Endothelial cell of umbilical vein (primary cell): ENCODE measurements at regions of chr3 and their contacts with region 1.

Region 1: DNA sequence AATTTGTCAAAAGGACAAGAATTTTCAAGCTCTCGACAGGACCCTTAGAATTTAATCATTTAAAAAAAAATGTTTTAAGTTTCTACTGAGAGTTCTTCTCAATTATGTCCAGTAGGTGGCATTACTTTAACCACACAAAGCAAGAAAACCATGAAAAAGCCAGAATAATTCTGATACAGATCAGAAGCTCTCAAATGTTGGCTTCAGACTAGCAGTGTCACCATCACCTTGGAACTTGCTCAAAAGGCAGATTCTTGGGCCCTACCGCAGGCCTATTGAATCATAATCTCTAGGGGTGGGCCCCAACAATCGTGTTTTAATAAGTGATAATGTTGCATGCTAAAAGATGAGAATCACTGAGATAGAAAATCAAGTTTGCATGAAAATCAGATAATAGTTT is 99.5 kb upstream of the KCNMB2 start:
- DNase-seq: peak; percentile 44
- H3K4me3 ChIP-seq: no peak overlapping the region
- H3K27ac ChIP-seq: no peak overlapping the region
- H3K4me1 ChIP-seq: no peaks in the 10 kb centered on the region
- H3K27me3 ChIP-seq: no peaks in the 10 kb centered on the region
- CTCF ChIP-seq: peak; percentile 29 to 42
- POLR2A ChIP-seq: no peak

Region 2: DNA sequence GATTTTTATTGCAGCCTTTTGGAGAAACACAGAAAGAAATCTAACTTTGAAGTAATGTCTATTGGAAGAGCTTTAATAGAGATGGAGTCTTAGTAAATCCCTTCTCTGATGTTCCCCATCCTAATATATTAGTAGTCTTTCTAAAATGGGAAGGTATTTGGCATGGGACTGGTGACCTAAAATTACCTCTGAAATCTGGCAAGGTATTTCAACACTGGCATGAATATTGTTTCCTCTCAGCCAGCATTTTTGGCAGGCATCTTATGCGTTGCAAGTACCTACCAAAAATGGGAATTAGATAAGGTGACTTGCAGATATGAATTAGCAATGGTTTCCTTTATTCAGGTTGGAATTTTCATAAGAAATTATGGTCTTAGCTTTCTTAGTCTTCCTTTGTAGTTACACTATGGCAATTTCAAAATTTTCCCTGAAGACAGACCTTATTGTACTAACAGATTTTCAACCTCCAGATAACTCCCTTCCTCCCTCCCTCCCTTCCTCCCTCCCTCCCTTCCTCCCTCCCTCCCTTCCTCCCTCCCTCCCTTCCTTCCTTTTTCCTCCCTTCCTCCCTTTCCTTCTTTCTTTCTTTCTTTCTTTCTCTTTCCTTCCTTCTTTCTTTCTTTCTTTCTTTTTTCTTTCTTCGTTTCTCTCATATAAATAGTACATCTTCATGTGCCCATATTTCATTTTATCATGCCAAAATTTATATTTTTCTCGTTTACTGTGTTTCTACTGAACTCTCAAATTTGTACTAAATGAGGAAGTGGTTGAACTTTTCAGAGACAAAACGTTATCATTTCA is 68.8 kb before region 1 on chr3:
- CTCF ChIA-PET with region 1: no interaction called
- POLR2A ChIA-PET with region 1: no interaction called
- dilution Hi-C with region 1: no loop called
- intact Hi-C with region 1: no loop called
- DNase-seq: peak; percentile 29
- H3K4me3 ChIP-seq: no peak overlapping the region
- H3K27ac ChIP-seq: no peak overlapping the region
- H3K4me1 ChIP-seq: no peaks in the 10 kb centered on the region
- H3K27me3 ChIP-seq: no peaks in the 10 kb centered on the region
- CTCF ChIP-seq: no peak
- POLR2A ChIP-seq: no peak

Region 3: DNA sequence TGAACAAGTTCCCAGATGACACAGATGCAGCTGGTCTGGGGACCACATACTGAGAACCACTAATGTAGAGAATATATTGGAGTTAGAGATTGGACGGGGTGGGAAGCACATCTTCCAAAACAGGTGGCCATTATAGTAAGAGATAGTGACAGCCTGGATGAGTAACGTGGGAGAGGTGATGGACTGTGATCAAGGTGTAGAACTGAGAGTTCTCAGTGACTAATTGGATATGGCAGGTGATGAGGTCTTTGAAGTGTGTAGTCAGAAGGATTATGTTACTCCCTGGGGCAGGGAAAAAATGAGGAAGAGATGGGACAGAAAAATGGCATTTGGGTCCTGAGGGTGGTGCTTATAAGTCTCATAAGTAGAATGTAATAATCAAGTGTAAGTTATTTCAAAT is 166.1 kb after region 1 on chr3:
- CTCF ChIA-PET with region 1: interaction called, 6 read pairs
- POLR2A ChIA-PET with region 1: no interaction called
- dilution Hi-C with region 1: no loop called
- intact Hi-C with region 1: loop called (anchors 1 kb)
- DNase-seq: no peak
- H3K4me3 ChIP-seq: no peak overlapping the region
- H3K27ac ChIP-seq: no peak overlapping the region
- H3K4me1 ChIP-seq: no peaks in the 10 kb centered on the region
- H3K27me3 ChIP-seq: peaks cover 3 to 4% of the 10 kb centered on the region in 2 experiments
- CTCF ChIP-seq: no peak
- POLR2A ChIP-seq: no peak

Region 4: DNA sequence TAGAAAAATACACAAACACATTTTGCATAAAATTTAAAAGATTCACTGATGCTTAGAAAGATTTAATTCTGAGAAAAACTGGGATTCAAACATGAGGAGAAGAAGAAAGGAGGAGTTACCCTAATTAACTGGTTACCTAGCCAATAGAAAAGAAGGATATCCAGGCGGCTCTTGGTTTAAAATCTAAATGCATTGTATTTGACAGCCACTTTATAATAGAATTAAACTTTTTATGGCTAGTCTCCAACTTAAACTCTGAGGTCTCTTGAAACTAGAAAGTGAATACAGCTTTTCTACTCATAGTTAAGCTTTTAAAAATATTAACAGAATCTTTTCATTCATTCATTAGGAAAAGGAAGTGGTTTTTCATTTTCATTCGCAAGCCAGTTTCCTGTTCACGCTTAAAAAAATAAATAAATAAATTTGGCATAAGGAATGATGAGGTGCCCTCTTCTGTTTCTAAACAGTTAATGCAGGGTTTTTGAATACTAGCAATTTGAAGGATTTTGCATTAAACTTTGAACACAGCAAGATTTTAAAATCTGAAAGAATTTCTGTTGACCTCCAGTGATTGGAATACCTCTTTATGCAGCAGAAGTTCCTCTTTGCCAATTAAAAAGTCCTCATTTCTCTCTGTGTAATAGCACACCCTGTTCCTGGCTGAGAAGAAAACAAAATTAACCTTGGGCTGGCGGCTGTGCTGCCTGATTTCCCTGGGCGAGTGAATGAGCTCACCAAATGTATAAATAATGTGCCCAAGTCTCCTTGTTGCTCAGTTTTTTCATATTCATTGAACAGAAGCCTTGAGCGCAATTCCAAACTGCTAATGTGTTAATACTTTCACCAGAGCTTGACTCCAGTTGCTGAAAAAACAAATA is 529.8 kb after region 1 on chr3:
- CTCF ChIA-PET with region 1: interaction called, 107 read pairs
- POLR2A ChIA-PET with region 1: interaction called, 3 read pairs
- dilution Hi-C with region 1: no loop called
- intact Hi-C with region 1: loop called (anchors 1 kb)
- DNase-seq: peak; percentile 72
- H3K4me3 ChIP-seq: peak overlapping the region in 1 of 3 experiments; percentile 38
- H3K27ac ChIP-seq: peak overlapping the region; percentile 35
- H3K4me1 ChIP-seq: peaks cover 16% of the 10 kb centered on the region
- H3K27me3 ChIP-seq: no peaks in the 10 kb centered on the region
- CTCF ChIP-seq: peak in 1 of 2 donors; percentile 29
- POLR2A ChIP-seq: no peak